GM12878 (cell line): ENCODE measurements at regions of chr9 and their contacts with region 1.

Region 1: DNA sequence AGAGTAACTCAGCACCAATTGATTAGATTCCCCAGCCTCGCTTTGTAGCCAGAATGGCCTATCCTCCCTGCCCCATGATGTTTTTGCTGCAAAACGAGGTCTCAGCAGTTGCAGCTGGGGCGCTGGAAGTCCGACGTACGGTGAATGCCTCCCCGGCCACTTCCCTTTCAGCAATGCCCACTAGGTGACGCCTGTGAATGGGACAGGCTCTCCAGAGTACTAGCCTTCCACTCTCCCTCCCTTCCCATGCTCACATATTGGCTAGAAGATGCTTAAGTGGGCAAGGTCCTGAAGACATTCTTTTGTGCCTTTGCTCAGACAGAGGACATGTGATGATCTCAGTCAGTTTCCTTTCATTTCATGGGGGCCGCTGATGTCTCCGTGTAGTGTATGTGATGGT is 50.8 kb downstream of the DMRT2 start:
- DNase-seq: no peak
- ATAC-seq: peak; percentile 59
- H3K4me3 ChIP-seq: no peak overlapping the region
- H3K27ac ChIP-seq: no peak overlapping the region
- H3K4me1 ChIP-seq: no peaks in the 10 kb centered on the region
- H3K27me3 ChIP-seq: no peaks in the 10 kb centered on the region
- CTCF ChIP-seq: peak; percentile 28 to 49 (median 36); a peak in 4 of 6 replicates
- EP300 ChIP-seq: no peak
- POLR2A ChIP-seq: no peak
- RAD21 ChIP-seq: peak; percentile 40; the same call in 1 of the 2 replicates

Region 2: DNA sequence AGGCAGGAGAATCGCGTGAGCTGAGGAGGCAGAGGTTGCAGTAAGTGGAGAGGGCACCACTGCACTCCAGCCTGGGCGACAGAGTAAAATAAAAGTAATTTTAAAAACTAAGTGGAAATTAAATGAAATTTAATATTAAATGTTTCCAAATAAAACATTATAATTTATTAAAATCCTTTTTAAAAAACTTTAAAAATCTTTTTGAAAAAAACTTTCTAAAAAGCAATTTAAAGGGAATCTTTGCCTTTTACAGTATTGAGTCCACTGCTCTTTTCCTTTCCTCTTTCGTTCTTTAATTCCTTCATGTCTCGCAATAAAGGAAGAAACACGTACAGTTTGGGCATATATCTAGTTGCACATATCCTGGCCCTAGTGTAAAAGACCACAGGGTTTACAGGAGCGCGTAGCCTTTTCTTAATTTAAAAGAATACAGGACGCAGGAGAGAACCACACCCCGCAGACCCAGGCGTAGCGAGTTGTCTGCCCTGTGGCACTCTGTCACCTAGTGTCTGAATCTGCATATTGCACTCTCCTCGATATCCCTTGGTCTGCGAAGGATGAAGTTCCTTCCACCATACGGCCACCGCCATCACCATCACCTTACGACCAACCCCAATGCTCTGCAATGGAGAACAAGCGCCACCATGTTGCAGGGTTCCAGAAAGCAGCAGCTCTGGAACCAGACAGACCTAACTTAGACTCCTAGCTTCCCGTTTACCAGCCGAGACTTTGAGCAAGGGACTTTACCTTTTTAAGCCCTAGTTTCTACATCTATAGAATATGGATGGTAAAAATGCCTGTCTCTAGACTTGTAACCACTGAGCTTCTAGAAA is 337.0 kb before region 1 on chr9:
- CTCF ChIA-PET with region 1: no interaction called
- POLR2A ChIA-PET with region 1: no interaction called
- RAD21 ChIA-PET with region 1: no interaction called
- SMC1A ChIA-PET with region 1: no interaction called
- in situ Hi-C with region 1: no loop called
- intact Hi-C with region 1: no loop called
- DNase-seq: no peak
- ATAC-seq: peak; percentile 98
- H3K4me3 ChIP-seq: no peak overlapping the region
- H3K27ac ChIP-seq: no peak overlapping the region
- H3K4me1 ChIP-seq: no peaks in the 10 kb centered on the region
- H3K27me3 ChIP-seq: peaks cover 0 to 1% of the 10 kb centered on the region in 2 experiments; a peak in 2 of 4 replicates
- CTCF ChIP-seq: peak; percentile 40 to 58 (median 50)
- EP300 ChIP-seq: no peak
- POLR2A ChIP-seq: no peak
- RAD21 ChIP-seq: peak; percentile 19

Region 3: DNA sequence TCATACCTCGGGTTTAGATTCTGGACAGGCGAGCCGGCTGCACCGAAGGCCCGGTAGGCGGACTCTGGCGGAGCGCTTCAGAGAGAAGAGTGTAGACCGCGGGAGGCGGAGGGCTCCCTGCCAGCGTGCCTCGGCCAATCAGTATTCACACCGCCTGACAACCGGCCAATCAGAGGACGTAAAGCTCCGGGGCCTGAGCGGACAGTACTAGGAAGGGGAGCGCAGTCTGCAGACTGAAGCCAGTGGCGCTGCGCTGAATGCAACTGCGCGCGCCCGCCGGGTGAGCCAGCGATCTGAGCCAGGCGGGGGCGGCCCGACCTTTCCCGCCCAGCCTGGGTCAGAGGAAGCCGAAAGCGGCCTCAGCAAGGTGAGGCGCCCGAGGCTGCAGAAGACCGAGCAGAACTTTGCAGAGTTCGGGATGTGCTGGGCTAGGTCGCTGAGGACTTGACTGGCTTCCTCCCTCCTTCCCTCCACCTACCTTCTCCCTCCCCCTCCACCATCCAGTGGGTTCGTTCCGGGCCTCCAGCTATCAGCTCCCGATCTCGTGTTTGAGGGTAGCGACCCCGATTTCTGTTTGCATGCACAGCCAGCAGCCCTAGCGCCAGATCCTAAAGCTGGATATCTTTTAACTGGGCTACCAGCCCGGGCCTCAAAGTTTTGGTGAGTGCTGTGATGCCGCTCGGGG is 50.7 kb before region 1 on chr9 and contains the start of gene DMRT2:
- CTCF ChIA-PET with region 1: interaction called, 5 read pairs
- POLR2A ChIA-PET with region 1: interaction called, 3 read pairs
- RAD21 ChIA-PET with region 1: interaction called, 9 read pairs
- SMC1A ChIA-PET with region 1: interaction called, 59 read pairs
- in situ Hi-C with region 1: no loop called
- intact Hi-C with region 1: no loop called
- DNase-seq: no peak
- ATAC-seq: peak; percentile 78
- H3K4me3 ChIP-seq: no peak within 1 kb of the TSS
- H3K27ac ChIP-seq: no peak within 1 kb of the TSS
- H3K4me1 ChIP-seq: no peaks in the 10 kb centered on the region
- H3K27me3 ChIP-seq: peaks cover 10 to 38% of the 10 kb centered on the region in 2 experiments
- CTCF ChIP-seq: no peak
- EP300 ChIP-seq: no peak
- POLR2A ChIP-seq: no peak
- RAD21 ChIP-seq: no peak
- polyA plus RNA-seq, gene DMRT2: 0.08 to 0.18 TPM

Region 4: GRCh38 chr9:1171546-1171945 is 70.6 kb after region 1 on chr9:
- CTCF ChIA-PET with region 1: no interaction called
- POLR2A ChIA-PET with region 1: no interaction called
- RAD21 ChIA-PET with region 1: no interaction called
- SMC1A ChIA-PET with region 1: no interaction called
- in situ Hi-C with region 1: no loop called
- intact Hi-C with region 1: no loop called
- DNase-seq: no peak
- ATAC-seq: no peak; the same call in 2 of the 3 replicates
- H3K4me3 ChIP-seq: no peak overlapping the region
- H3K27ac ChIP-seq: no peak overlapping the region
- H3K4me1 ChIP-seq: no peaks in the 10 kb centered on the region
- H3K27me3 ChIP-seq: no peaks in the 10 kb centered on the region
- CTCF ChIP-seq: no peak
- EP300 ChIP-seq: no peak
- POLR2A ChIP-seq: no peak
- RAD21 ChIP-seq: no peak

Region 5: GRCh38 chr9:1256178-1256577 is 155.2 kb after region 1 on chr9:
- CTCF ChIA-PET with region 1: no interaction called
- POLR2A ChIA-PET with region 1: no interaction called
- RAD21 ChIA-PET with region 1: no interaction called
- SMC1A ChIA-PET with region 1: no interaction called
- in situ Hi-C with region 1: no loop called
- intact Hi-C with region 1: no loop called
- DNase-seq: no peak
- ATAC-seq: no peak
- H3K4me3 ChIP-seq: no peak overlapping the region
- H3K27ac ChIP-seq: no peak overlapping the region
- H3K4me1 ChIP-seq: no peaks in the 10 kb centered on the region
- H3K27me3 ChIP-seq: no peaks in the 10 kb centered on the region; a peak in 2 of 4 replicates
- CTCF ChIP-seq: no peak
- EP300 ChIP-seq: no peak
- POLR2A ChIP-seq: no peak
- RAD21 ChIP-seq: no peak

Region 6: GRCh38 chr9:1337161-1337560 is 236.2 kb after region 1 on chr9:
- CTCF ChIA-PET with region 1: interaction called, 6 read pairs
- POLR2A ChIA-PET with region 1: no interaction called
- RAD21 ChIA-PET with region 1: interaction called, 3 read pairs
- SMC1A ChIA-PET with region 1: interaction called, 31 read pairs
- in situ Hi-C with region 1: no loop called
- intact Hi-C with region 1: no loop called
- DNase-seq: no peak
- ATAC-seq: peak; percentile 51
- H3K4me3 ChIP-seq: no peak overlapping the region
- H3K27ac ChIP-seq: no peak overlapping the region
- H3K4me1 ChIP-seq: no peaks in the 10 kb centered on the region
- H3K27me3 ChIP-seq: no peaks in the 10 kb centered on the region
- CTCF ChIP-seq: no peak; a peak in 1 of 6 replicates
- EP300 ChIP-seq: no peak
- POLR2A ChIP-seq: no peak
- RAD21 ChIP-seq: no peak

Region 7: GRCh38 chr9:1400983-1401382 is 300.0 kb after region 1 on chr9:
- CTCF ChIA-PET with region 1: interaction called, 20 read pairs
- POLR2A ChIA-PET with region 1: no interaction called
- RAD21 ChIA-PET with region 1: interaction called, 20 read pairs
- SMC1A ChIA-PET with region 1: interaction called, 20 read pairs
- in situ Hi-C with region 1: no loop called
- intact Hi-C with region 1: no loop called
- DNase-seq: no peak
- ATAC-seq: peak; percentile 67
- H3K4me3 ChIP-seq: no peak overlapping the region
- H3K27ac ChIP-seq: no peak overlapping the region
- H3K4me1 ChIP-seq: no peaks in the 10 kb centered on the region
- H3K27me3 ChIP-seq: no peaks in the 10 kb centered on the region
- CTCF ChIP-seq: peak in 1 of 3 experiments; percentile 26; a peak in 2 of 6 replicates
- EP300 ChIP-seq: no peak
- POLR2A ChIP-seq: no peak
- RAD21 ChIP-seq: no peak

Region 8: DNA sequence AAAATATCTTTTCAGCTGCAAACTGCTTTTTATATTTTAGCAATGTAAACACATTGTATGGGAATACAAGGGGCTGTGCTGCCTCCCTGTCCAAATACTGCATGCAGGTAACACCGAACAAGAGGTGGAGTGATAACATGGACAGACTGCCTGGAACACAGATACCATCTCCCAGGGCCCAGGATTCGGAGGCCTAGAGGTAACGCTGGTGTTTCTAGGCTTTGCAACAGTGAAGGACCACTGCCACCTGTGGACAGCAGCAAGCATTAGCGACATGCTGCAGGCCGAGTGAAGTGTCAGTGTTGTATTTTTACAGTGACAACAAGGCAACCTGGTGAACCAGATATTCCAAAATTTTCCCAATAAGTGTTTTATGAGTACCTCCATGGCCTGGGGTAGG is 328.4 kb after region 1 on chr9:
- CTCF ChIA-PET with region 1: interaction called, 18 read pairs
- POLR2A ChIA-PET with region 1: no interaction called
- RAD21 ChIA-PET with region 1: interaction called, 14 read pairs
- SMC1A ChIA-PET with region 1: interaction called, 7 read pairs
- in situ Hi-C with region 1: no loop called
- intact Hi-C with region 1: no loop called
- DNase-seq: no peak
- ATAC-seq: peak; percentile 77
- H3K4me3 ChIP-seq: no peak overlapping the region
- H3K27ac ChIP-seq: no peak overlapping the region
- H3K4me1 ChIP-seq: no peaks in the 10 kb centered on the region
- H3K27me3 ChIP-seq: no peaks in the 10 kb centered on the region
- CTCF ChIP-seq: peak in 2 of 3 experiments; percentile 5 to 52; a peak in 2 of 6 replicates
- EP300 ChIP-seq: no peak
- POLR2A ChIP-seq: no peak
- RAD21 ChIP-seq: peak; percentile 21; the same call in 1 of the 2 replicates